CD4-positive, alpha-beta memory T cell (primary cell): ENCODE measurements at regions of chr19 and their contacts with region 1.

Region 1: DNA sequence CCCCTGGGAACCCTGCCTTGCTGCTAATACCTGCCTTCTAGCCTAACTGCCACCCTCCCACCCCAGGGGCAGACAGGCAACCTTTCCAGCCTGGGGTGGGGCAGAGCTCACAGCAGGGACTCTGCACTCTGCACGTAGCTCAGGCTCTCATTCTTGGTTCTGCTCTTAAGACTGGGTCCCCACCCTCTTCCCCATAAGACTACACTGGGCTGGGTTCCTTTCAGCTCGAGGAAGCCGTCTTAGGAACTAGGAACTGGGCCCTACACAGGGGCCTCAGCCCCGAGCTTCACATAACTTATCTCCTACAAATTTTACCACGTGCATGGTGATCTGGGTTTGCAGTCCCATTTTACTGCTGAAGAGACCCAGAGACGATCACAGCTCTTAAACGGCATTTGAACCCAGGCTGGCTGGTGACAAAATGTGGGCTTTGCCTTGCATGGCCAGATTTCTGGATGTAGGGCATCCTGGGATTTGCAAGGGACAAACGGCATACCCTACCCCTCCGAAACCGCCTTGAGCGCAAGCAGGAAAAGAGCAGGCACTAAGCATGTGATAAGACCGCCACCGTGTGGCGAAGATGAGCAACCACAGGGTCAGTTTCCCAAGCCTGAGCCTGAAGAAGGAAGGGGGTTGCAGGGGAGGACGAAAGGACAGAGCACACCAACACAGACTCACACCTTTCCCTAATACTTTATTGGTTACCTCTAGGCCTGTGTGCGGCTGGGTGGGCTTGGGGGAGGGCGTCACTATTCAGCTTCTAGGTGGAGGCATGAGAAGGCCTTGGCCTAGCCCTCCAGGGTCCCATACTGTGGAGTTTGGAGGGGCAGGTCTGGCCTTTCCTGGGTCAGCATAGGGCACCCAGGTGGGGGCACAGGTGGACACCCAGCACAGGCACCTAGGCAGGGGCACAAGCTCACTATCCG is 5.1 kb downstream of the JUNB start:
- DNase-seq: peak; percentile 79 to 84 (median 79)
- H3K4me3 ChIP-seq: peak overlapping the region in 1 of 2 donors; percentile 42
- H3K4me3 Mint-ChIP-seq: peak overlapping the region; percentile 59 to 89 (median 82)
- H3K27ac ChIP-seq: peak overlapping the region; percentile 42
- H3K27ac Mint-ChIP-seq: peak overlapping the region in 6 of 7 donors; percentile 95 to 99 (median 97)
- H3K4me1 ChIP-seq: peaks cover 42% of the 10 kb centered on the region
- H3K4me1 Mint-ChIP-seq: peaks cover 25 to 51% (median 34%) of the 10 kb centered on the region in 4 donors
- H3K27me3 ChIP-seq: no peaks in the 10 kb centered on the region
- H3K27me3 Mint-ChIP-seq: no peaks in the 10 kb centered on the region

Region 2: DNA sequence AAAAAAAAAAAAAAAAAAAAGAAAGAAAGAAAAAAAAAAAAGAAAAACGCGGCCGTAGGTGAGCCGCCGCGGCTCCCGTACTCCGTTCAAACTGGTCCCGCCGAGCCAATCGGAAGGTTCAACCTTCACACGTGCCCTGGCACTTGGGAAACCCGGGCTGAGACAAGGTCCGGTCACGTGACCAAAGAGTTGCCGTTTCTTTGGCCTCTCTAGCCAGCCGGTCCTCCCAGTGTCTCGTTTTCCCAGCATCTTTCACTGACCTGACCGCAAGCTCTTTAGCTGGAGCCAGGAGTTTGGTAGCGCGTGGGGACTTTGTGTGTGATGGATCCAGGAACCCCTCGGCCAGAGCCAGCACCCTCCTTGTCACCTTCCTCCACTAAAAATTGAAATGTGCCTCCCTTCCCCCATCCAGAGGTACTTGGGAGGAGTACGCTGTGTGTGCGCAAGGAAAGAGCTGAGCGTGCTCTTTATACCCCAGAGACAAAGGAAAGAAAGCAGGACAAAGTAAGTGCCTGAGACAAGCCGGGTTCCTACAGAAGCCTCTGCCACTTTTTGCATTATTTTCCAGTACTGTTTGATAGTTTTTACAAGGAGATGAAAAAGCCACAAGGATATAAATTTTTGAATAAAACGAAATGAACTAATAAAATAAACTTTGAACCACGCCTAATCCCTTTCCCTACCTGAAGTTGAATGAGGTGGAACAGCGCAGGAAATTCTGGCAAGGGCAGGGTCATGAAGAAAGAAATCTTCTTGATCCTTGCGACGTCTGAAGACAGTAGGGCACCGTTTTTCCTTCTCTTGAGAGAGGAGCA is 73.6 kb before region 1 on chr19:
- CTCF ChIA-PET with region 1: interaction called, 13 read pairs
- POLR2A ChIA-PET with region 1: interaction called, 54 read pairs
- intact Hi-C with region 1: loop called (anchors 1 kb)
- DNase-seq: peak; percentile 91 to 97 (median 95)
- H3K4me3 ChIP-seq: peak overlapping the region; percentile 21 to 78
- H3K4me3 Mint-ChIP-seq: peak overlapping the region; percentile 87 to 98 (median 92)
- H3K27ac ChIP-seq: peak overlapping the region; percentile 73
- H3K27ac Mint-ChIP-seq: peak overlapping the region; percentile 88 to 98 (median 93)
- H3K4me1 ChIP-seq: peaks cover 30% of the 10 kb centered on the region
- H3K4me1 Mint-ChIP-seq: peaks cover 21 to 54% (median 35%) of the 10 kb centered on the region in 4 donors
- H3K27me3 ChIP-seq: no peaks in the 10 kb centered on the region
- H3K27me3 Mint-ChIP-seq: peaks cover 0 to 1% of the 10 kb centered on the region in 2 donors

Region 3: GRCh38 chr19:12757544-12758274 is 38.7 kb before region 1 on chr19:
- CTCF ChIA-PET with region 1: interaction called, 906 read pairs
- POLR2A ChIA-PET with region 1: interaction called, 15 read pairs
- intact Hi-C with region 1: loop called (anchors 1 kb)
- DNase-seq: peak in 4 of 5 donors; percentile 56 to 61 (median 58)
- H3K4me3 ChIP-seq: no peak overlapping the region
- H3K4me3 Mint-ChIP-seq: peak overlapping the region in 5 of 8 donors; percentile 5 to 41 (median 32)
- H3K27ac ChIP-seq: no peak overlapping the region
- H3K27ac Mint-ChIP-seq: no peak overlapping the region
- H3K4me1 ChIP-seq: peaks cover 3% of the 10 kb centered on the region
- H3K4me1 Mint-ChIP-seq: peaks cover 4 to 10% (median 5%) of the 10 kb centered on the region in 4 donors
- H3K27me3 ChIP-seq: no peaks in the 10 kb centered on the region
- H3K27me3 Mint-ChIP-seq: peaks cover 1 to 7% of the 10 kb centered on the region in 2 donors

Region 4: DNA sequence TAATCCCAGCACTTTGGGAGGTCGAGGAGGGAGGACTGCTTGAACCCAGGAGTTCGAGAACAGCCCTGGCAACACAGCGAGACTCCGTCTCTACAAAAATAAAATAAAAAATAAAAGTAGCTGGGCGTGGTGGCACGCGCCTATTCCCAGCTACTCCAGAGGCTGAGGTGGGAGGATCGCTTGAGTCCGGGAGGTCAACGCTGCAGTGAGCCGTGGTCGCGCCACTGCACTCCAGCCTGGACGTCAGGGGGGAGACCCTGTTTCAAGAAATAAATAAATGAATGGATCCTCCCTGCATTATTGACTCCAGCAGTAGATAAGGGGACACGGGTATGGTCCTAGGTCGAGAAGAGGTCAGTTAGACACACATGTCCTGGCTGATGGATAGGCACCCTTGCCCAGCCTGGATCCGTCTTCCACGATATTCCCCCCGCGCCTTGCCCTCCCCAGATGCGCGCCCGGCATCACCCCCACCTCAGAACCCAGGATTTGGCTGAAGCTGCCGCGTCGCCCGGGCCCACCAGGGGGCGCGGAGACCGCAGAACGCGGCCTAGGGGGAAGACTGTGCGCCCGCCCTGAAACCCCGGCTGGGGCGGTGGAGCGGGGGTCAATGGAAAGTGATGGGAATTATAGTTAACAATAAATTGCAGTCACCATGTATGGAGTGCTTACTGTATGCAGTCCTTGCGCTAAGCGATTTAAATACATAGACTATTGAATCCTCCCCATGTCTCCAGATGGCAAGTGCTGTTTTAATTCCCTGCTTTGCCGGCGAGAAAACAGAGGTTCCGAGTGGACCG is 19.0 kb before region 1 on chr19:
- CTCF ChIA-PET with region 1: interaction called, 906 read pairs
- POLR2A ChIA-PET with region 1: interaction called, 1,162 read pairs
- intact Hi-C with region 1: loop called (anchors 1 kb)
- DNase-seq: peak; percentile 77 to 83 (median 80)
- H3K4me3 ChIP-seq: peak overlapping the region; percentile 69 to 76
- H3K4me3 Mint-ChIP-seq: peak overlapping the region; percentile 85 to 92 (median 87)
- H3K27ac ChIP-seq: peak overlapping the region; percentile 86
- H3K27ac Mint-ChIP-seq: peak overlapping the region; percentile 92 to 97 (median 94)
- H3K4me1 ChIP-seq: peaks cover 42% of the 10 kb centered on the region
- H3K4me1 Mint-ChIP-seq: peaks cover 25 to 52% (median 35%) of the 10 kb centered on the region in 4 donors
- H3K27me3 ChIP-seq: no peaks in the 10 kb centered on the region
- H3K27me3 Mint-ChIP-seq: no peaks in the 10 kb centered on the region

Region 5: DNA sequence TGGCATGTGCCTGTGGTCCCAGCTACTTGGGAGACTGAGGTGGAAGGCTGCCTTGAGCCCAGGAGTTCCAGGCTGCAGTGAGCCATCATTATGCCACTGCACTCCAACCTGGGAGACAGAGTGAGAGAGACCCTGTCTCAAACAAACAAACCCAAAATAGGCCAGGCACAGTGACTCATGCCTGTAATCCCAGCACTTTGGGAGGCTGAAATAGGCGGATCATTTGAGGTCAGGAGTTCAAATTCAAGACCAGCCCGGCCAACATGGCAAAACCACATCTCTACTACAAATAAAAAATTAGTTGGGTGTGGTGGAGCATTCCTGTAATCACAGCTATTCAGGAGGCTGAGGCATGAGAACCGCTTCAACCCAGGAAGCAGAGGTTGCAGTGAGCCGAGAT is 346.7 kb after region 1 on chr19:
- CTCF ChIA-PET with region 1: no interaction called
- POLR2A ChIA-PET with region 1: no interaction called
- intact Hi-C with region 1: no loop called
- DNase-seq: no peak
- H3K4me3 ChIP-seq: no peak overlapping the region
- H3K4me3 Mint-ChIP-seq: no peak overlapping the region
- H3K27ac ChIP-seq: no peak overlapping the region
- H3K27ac Mint-ChIP-seq: no peak overlapping the region
- H3K4me1 ChIP-seq: peaks cover 4% of the 10 kb centered on the region
- H3K4me1 Mint-ChIP-seq: peaks cover 0 to 8% (median 2%) of the 10 kb centered on the region in 4 donors
- H3K27me3 ChIP-seq: no peaks in the 10 kb centered on the region
- H3K27me3 Mint-ChIP-seq: no peaks in the 10 kb centered on the region